Activated CD4-positive, alpha-beta memory T cell treated with anti-CD3 and anti-CD28 coated beads for 36 hours (primary cell): ENCODE measurements at regions of chr14 and their contacts with region 1.

Region 1: DNA sequence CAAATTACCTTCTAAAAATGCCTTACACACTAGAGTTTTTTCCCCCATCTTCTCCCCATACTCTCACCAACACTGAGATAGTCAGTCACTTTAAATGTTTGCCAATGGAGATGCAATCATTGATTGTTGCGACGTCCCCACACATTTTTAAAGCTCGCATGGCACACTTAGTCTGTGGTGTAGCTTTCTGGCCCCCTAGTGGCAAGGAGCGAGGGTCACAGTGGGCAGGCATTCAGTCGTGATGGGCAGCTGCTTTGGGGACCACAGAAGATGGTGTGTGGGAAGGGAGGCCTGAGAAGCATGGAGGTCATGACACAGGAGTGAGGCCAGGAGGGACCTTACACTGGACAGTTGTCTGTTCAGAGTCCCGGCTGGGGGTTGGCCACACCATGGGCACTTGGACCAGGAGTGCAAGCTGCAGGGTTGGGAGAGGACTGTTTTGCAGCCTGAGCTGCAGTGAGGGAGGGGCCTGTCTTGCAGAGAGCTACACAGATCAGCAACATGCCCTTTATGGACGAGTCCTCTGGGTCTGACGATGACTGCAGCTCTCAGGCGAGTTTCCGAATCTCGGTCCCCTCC is 28.7 kb downstream of the PIGH start:
- DNase-seq: peak; percentile 78
- H3K4me3 Mint-ChIP-seq: no peak overlapping the region
- H3K27ac Mint-ChIP-seq: no peak overlapping the region
- H3K4me1 Mint-ChIP-seq: no peaks in the 10 kb centered on the region
- H3K27me3 Mint-ChIP-seq: peaks cover 2% of the 10 kb centered on the region

Region 2: DNA sequence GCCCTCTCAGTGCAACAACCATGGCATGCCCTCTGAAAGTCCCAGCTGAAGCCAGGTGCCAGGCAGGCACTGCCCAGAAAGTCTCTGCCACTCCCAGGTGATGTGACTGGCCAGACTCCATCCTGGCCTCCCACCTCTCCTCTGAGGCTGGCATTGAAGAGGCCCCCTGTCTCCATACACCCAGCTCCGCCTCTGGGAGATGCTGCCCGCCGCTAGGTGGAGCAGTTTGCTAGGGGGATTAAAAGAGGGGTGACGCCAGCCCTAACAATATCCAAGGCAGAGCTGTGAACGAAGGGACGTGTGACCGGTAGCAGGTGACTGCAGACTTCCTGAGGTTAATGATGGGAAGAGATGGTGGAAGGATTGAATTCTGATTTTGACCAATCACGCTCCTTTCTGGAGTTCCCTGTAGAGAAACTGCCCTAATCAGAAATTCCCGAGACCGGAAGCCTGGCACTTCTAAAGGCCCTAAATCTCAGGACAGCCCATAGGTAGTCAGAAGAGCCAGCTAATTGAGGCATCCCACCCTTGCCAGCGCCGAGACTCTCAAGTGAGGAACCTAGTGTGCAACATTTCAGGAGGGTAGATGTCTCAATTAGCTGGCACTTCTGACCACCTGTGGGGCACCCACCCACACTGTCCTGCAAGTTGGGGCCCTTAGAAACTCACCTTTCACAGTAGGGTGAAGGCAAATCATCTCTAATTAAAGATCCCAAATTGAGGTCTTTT is 151.1 kb before region 1 on chr14:
- CTCF ChIA-PET with region 1: interaction called, 249 read pairs
- POLR2A ChIA-PET with region 1: no interaction called
- intact Hi-C with region 1: no loop called
- DNase-seq: peak; percentile 58
- H3K4me3 Mint-ChIP-seq: no peak overlapping the region
- H3K27ac Mint-ChIP-seq: no peak overlapping the region
- H3K4me1 Mint-ChIP-seq: no peaks in the 10 kb centered on the region
- H3K27me3 Mint-ChIP-seq: peaks cover 10% of the 10 kb centered on the region

Region 3: GRCh38 chr14:67444401-67444800 is 127.0 kb before region 1 on chr14:
- CTCF ChIA-PET with region 1: interaction called, 10 read pairs
- POLR2A ChIA-PET with region 1: no interaction called
- intact Hi-C with region 1: no loop called
- DNase-seq: no peak
- H3K4me3 Mint-ChIP-seq: no peak overlapping the region
- H3K27ac Mint-ChIP-seq: no peak overlapping the region
- H3K4me1 Mint-ChIP-seq: no peaks in the 10 kb centered on the region
- H3K27me3 Mint-ChIP-seq: peaks cover 7% of the 10 kb centered on the region

Region 4: GRCh38 chr14:67526676-67527459 is 44.5 kb before region 1 on chr14:
- CTCF ChIA-PET with region 1: interaction called, 97 read pairs
- POLR2A ChIA-PET with region 1: no interaction called
- intact Hi-C with region 1: loop called (anchors 1 kb)
- DNase-seq: peak; percentile 52
- H3K4me3 Mint-ChIP-seq: no peak overlapping the region
- H3K27ac Mint-ChIP-seq: no peak overlapping the region
- H3K4me1 Mint-ChIP-seq: peaks cover 3% of the 10 kb centered on the region
- H3K27me3 Mint-ChIP-seq: peaks cover 22% of the 10 kb centered on the region

Region 5: DNA sequence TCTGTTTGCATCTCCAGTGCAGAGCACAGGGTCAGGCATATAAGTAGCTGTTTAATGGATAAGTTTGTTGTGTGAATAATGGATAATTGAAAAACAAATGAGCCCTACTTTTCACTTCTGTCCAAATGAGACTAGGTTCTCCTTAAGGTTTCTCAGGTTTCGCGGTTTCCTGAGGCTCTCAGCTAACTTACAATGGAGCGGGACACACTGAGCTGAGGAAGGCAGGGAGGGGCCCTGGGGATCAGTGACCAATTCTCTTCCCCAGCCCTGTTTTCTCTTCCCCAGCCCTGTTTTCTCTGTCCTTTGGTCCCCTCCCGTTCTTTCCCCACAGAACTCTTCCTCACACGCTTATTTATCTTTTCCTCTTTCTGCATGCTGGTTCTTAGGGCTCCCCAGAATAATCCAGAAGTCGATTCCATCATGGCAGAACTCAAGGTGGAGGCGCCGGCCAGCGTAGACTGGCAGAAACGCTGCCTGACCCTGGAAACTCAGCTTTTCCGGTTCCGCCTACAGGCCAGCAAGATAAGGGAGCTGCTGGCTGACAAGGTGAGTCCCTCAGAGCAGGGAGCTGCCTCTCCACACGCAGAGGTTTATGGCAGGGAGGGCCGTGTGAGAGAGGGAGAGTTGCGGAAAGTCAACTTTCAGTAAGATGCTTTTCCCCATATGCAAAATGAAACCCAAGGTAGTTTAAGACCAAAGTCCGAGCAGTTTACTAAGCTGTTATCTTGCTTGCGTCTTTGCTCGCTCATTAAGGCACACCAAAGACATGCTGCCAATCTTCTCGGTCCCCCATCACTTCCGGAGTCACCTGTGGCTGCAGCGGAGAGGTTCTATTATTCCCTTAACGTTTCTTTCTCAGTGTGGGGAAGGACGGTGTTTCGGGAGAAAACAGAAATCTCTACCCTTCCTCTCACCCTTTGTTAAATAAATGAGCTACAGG is 29.6 kb before region 1 on chr14:
- CTCF ChIA-PET with region 1: interaction called, 14 read pairs
- POLR2A ChIA-PET with region 1: no interaction called
- intact Hi-C with region 1: no loop called
- DNase-seq: peak; percentile 37
- H3K4me3 Mint-ChIP-seq: peak overlapping the region; percentile 50
- H3K27ac Mint-ChIP-seq: no peak overlapping the region
- H3K4me1 Mint-ChIP-seq: peaks cover 5% of the 10 kb centered on the region
- H3K27me3 Mint-ChIP-seq: peaks cover 22% of the 10 kb centered on the region

Region 6: DNA sequence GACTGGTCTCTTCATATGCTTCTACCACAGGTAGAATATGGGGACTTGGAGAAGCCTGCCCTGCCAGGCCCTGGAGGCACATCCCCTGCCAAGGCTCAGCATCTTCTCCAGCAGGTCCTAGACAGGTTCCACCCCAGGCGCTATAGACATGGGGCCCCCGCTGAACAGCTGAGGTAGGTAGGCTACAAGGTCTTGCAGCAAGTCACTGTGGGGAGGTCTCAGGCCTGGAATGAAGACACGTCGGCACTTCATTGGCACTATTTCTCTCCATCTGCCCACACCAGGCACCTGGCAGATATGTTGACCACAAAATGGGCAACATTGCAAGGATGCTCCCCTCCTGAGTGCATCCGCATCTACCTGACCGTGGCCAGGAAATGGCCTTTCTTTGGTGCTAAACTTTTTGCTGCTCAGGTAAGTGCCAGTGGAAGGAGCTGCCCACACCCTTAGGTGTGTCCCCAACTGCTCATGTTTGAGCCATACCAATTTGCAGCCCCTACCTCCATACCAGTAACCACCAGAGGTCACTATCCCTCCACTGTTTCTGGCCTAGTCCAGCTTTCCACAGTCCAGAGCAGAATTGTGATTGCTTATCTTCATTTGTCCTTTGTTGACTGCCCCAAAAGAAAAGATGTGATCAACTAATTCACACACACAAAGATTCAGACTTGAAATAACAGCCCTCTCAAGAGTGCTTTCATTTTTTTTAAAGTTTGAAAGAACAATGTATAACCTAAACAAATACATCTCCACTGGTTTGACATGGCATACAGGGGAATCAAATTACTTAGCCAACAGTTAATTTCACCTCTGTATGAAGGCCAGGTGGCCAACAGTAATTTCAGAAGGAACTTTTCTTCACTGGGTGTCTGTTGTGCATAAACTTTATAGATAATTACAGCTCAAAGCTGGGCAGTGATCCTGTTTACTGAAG is 12.6 kb after region 1 on chr14:
- CTCF ChIA-PET with region 1: interaction called, 27 read pairs
- POLR2A ChIA-PET with region 1: no interaction called
- intact Hi-C with region 1: no loop called
- DNase-seq: peak; percentile 32
- H3K4me3 Mint-ChIP-seq: no peak overlapping the region
- H3K27ac Mint-ChIP-seq: no peak overlapping the region
- H3K4me1 Mint-ChIP-seq: no peaks in the 10 kb centered on the region
- H3K27me3 Mint-ChIP-seq: no peaks in the 10 kb centered on the region

Region 7: GRCh38 chr14:67666750-67667449 is 95.5 kb after region 1 on chr14:
- CTCF ChIA-PET with region 1: interaction called, 10 read pairs
- POLR2A ChIA-PET with region 1: no interaction called
- intact Hi-C with region 1: no loop called
- DNase-seq: peak; percentile 20
- H3K4me3 Mint-ChIP-seq: no peak overlapping the region
- H3K27ac Mint-ChIP-seq: no peak overlapping the region
- H3K4me1 Mint-ChIP-seq: peaks cover 56% of the 10 kb centered on the region
- H3K27me3 Mint-ChIP-seq: no peaks in the 10 kb centered on the region